ENCODE measurements at regions of chr11 and their contacts with region 1.

Region 1: DNA sequence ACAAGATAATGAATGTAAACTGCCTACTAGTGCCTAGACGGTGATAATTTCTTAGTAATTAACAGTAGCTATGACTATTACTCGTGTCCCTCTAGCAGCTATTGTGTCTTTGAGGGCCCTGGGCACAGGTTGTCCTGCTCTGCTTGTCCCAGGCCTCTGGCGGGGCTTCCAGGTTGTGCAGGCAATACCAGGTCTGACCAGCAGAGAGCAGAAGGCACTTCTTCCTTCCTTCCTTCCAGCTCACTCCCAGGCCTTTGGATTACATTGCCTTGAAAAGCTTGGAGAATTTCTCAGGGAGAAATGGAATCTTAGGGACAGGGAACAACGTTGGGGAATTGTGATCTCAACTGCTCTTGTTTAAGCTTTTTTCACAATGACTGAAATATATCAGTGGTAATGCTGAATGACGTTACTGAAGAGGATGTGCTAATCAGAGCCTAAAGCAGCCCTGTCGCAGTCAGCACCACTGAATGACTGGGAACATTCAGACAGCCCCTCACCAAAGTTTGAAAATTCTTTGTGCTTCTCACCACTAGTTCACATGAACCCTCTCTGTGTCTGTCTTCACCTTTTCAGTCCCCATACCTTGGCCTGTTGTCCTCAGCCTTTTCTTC is 8.4 kb upstream of the CCKBR start:
- DNase-seq: peak; percentile 56
- H3K4me3 ChIP-seq: no peak overlapping the region
- H3K27ac ChIP-seq: no peak overlapping the region
- H3K4me1 ChIP-seq: no peaks in the 10 kb centered on the region
- H3K27me3 ChIP-seq: no peaks in the 10 kb centered on the region
- CTCF ChIP-seq: peak; percentile 92 to 94

Region 2: GRCh38 chr11:6283453-6284023 is 32.3 kb after region 1 on chr11:
- CTCF ChIA-PET with region 1: no interaction called
- dilution Hi-C with region 1: no loop called
- in situ Hi-C with region 1: no loop called
- intact Hi-C with region 1: no loop called
- DNase-seq: no peak
- H3K4me3 ChIP-seq: no peak overlapping the region
- H3K27ac ChIP-seq: no peak overlapping the region
- H3K4me1 ChIP-seq: peaks cover 10% of the 10 kb centered on the region
- H3K27me3 ChIP-seq: no peaks in the 10 kb centered on the region
- CTCF ChIP-seq: no peak

Region 3: GRCh38 chr11:6307876-6308275 is 56.6 kb after region 1 on chr11:
- CTCF ChIA-PET with region 1: no interaction called
- dilution Hi-C with region 1: loop called (anchors 10 kb)
- in situ Hi-C with region 1: loop called in 1 of 2 experiments (anchors 10 kb)
- intact Hi-C with region 1: no loop called
- DNase-seq: no peak
- H3K4me3 ChIP-seq: no peak overlapping the region
- H3K27ac ChIP-seq: no peak overlapping the region
- H3K4me1 ChIP-seq: no peaks in the 10 kb centered on the region
- H3K27me3 ChIP-seq: no peaks in the 10 kb centered on the region
- CTCF ChIP-seq: no peak

Region 4: DNA sequence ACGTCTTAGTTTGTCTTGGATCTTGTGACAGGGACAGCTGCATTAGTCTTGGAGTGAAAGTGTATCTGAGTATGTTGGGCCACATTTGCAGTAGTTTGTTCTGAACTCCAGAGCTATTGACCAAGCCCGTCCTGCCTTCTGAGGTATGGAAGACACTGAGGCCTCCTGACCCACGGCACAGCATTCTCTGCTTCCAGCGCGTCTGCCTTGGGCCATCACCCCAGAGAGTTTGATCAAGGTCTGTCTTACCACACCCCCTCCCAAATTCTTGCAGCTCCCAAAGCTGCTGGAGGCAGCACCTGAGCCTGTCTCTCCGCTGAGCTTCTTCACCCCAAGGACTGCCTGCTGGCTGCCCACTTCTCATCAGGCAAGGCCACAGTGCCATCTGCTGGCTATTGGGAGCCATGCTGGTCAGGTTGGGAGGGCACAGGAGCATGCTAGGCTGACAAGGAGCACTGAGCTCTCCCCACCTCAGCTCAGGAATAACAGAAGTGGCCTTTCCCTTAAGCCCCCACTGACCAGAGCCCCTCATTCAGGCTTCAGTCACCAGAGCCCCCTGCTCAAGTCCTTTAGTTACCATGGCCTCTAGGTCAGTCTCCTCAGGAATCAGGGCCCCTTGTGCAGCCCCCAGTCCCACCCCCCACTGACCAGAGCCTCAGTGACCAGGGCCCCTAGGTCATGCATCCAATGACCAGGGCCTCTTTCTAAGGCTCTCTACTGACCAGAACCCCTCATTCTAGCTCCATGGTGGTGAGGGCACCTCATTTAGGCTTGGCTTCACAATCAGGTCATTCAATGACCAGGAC is 111.8 kb after region 1 on chr11:
- CTCF ChIA-PET with region 1: interaction called, 3 read pairs
- dilution Hi-C with region 1: no loop called
- in situ Hi-C with region 1: no loop called
- intact Hi-C with region 1: loop called (anchors 1 kb)
- DNase-seq: peak; percentile 68
- H3K4me3 ChIP-seq: no peak overlapping the region
- H3K27ac ChIP-seq: no peak overlapping the region
- H3K4me1 ChIP-seq: no peaks in the 10 kb centered on the region
- H3K27me3 ChIP-seq: no peaks in the 10 kb centered on the region
- CTCF ChIP-seq: peak; percentile 98 to 99